ENCODE measurements at regions of chr7 and their contacts with region 1.

Region 1: GRCh38 chr7:2354186-2354938 is at the start of gene EIF3B:
- DNase-seq: peak; percentile 96
- H3K4me3 ChIP-seq: peak within 1 kb of the TSS; percentile 92
- H3K27ac ChIP-seq: peak within 1 kb of the TSS; percentile 97
- H3K4me1 ChIP-seq: peaks cover 18% of the 10 kb centered on the region
- H3K27me3 ChIP-seq: no peaks in the 10 kb centered on the region
- total RNA-seq, gene EIF3B: 180 and 212 TPM in 2 replicates

Region 2: GRCh38 chr7:1569833-1570633 is 784.3 kb before region 1 on chr7 and contains the start of gene PSMG3:
- in situ Hi-C with region 1: loop called (anchors 10 kb)
- DNase-seq: peak; percentile 99
- H3K4me3 ChIP-seq: peak within 1 kb of the TSS; percentile 84
- H3K27ac ChIP-seq: peak within 1 kb of the TSS; percentile 99
- H3K4me1 ChIP-seq: peaks cover 36% of the 10 kb centered on the region
- H3K27me3 ChIP-seq: no peaks in the 10 kb centered on the region
- total RNA-seq, gene PSMG3: 28.3 and 36.8 TPM in 2 replicates

Region 3: DNA sequence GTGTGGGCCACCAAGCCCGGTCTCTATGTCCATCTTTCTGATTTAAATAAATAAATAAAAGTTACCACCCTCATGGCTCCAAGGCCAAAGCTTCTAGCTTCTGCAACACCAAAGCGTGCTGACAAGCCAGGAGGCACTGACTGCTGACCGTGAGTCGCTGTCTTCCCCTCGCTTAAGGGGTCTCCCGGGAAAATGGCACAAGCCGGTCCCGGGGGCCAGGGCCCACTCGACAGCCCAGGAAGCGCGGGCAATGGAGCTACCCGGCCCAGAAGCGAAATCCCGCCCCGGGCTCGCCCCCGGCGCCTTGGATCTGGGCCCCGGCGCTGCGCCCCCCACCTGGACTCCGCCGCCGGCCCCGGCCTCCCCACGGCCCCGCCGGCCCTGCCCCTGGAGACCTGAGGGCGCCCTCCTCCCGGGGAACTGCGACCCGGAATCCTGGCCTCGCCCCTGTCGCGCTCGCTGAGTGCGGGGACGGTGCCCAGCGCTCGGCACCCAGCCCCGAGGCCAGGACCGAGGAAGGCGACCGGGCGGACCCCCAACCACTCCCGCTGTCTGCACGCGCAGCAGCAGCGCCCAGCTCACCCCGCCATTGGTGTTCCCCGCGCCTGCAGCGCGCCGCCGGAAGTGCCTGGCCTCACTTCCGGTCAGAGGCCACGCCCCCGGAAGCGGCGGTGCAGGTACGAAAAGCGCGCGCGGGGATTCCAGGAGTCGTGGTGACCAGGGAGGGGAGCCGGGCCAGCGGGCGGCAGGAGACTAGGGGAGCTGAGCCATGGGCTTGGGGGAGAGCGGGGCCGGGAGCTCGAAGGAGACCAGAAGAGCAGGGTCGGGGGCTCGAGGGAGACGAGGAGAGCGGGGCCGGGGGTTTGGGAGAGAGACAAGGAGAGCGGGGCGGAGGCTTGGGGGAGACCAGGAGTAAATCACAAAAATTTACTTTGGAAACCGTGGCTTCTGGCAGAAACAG is 112.5 kb before region 1 on chr7 and contains the starts of genes MRM2 and NUDT1:
- in situ Hi-C with region 1: loop called (anchors 10 kb)
- DNase-seq: peak; percentile 90
- H3K4me3 ChIP-seq: peak within 1 kb of the TSS; percentile 79
- H3K27ac ChIP-seq: peak within 1 kb of the TSS; percentile 60
- H3K4me1 ChIP-seq: no peaks in the 10 kb centered on the region; the same call in 1 of the 2 replicates
- H3K27me3 ChIP-seq: no peaks in the 10 kb centered on the region
- total RNA-seq, gene MRM2: 20.8 and 21.5 TPM in 2 replicates
- total RNA-seq, gene NUDT1: 15.7 and 61.0 TPM in 2 replicates